ENCODE measurements at regions of chr4 and their contacts with region 1.

Region 1: GRCh38 chr4:8871417-8872401 is at the start of gene HMX1:
- DNase-seq: no peak
- ATAC-seq: peak in 1 of 4 donors; percentile 57
- H3K4me3 ChIP-seq: no peak within 1 kb of the TSS
- H3K27ac ChIP-seq: no peak within 1 kb of the TSS
- H3K4me1 ChIP-seq: no peaks in the 10 kb centered on the region
- H3K27me3 ChIP-seq: peaks cover 0 to 55% (median 8%) of the 10 kb centered on the region in 4 donors
- CTCF ChIP-seq: no peak
- total RNA-seq, gene HMX1: not detected

Region 2: GRCh38 chr4:8690216-8691150 is 181.2 kb before region 1 on chr4:
- intact Hi-C with region 1: loop called in 1 of 3 experiments (anchors 10 kb)
- DNase-seq: no peak
- ATAC-seq: no peak
- H3K4me3 ChIP-seq: no peak overlapping the region
- H3K27ac ChIP-seq: no peak overlapping the region
- H3K4me1 ChIP-seq: no peaks in the 10 kb centered on the region
- H3K27me3 ChIP-seq: peaks cover 0 to 5% (median 0%) of the 10 kb centered on the region in 4 donors
- CTCF ChIP-seq: no peak

Measured in pancreas (tissue), 10 donors.